ENCODE measurements at regions of chr17 and their contacts with region 1.

Region 1: GRCh38 chr17:17919169-17920107 is 52.8 kb downstream of the TOM1L2 start:
- DNase-seq: peak; percentile 81
- ATAC-seq: peak; percentile 95
- H3K4me3 Mint-ChIP-seq: no peak overlapping the region
- H3K27ac Mint-ChIP-seq: no peak overlapping the region
- H3K4me1 Mint-ChIP-seq: peaks cover 11% of the 10 kb centered on the region
- H3K27me3 Mint-ChIP-seq: no peaks in the 10 kb centered on the region

Region 2: DNA sequence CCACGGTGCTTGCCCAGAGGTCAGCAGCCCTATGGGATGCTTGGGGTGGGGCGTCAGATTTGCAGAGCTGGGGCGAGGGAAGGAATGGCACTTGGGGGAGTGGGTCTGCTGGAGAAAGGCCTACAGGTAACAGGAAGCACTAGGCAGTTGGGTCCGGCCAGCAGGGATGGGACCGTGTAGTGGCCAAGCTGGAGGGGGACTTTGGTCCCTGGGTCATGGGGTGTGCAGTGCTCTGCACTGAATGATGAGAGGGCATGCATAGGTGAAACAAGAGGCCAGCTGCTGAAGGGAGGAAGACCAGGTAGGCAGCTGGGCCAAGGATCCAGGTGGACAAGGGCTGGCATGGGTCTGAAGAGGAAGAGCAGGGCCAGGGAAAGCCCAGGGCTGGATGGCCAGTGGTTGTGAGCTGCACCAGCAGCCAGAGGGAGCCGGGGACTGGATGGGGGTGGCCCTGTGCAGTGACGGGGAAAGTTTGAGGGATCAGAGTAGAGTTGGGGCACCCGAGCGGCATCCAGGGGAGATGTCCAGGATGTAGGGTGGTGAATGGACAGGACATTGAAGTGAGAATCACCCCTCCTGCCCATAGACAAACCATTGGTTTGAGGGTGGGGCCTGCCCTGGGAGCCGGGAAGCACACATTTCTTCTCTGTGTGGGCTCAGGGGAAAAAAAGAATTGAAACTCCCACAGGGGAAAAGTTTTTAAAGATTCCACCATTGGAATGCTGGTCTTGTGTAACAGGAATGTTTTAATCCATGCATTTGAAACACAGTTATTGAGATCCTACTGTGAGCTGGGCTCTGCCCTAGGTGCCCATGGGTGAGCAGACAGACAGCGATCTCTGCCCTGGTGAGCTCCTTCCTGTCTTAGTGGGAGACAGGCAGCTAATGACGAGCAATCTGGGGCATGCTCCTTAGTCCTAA is 213.0 kb before region 1 on chr17:
- CTCF ChIA-PET with region 1: no interaction called
- POLR2A ChIA-PET with region 1: no interaction called
- intact Hi-C with region 1: no loop called
- DNase-seq: no peak
- ATAC-seq: no peak
- H3K4me3 Mint-ChIP-seq: no peak overlapping the region
- H3K27ac Mint-ChIP-seq: no peak overlapping the region
- H3K4me1 Mint-ChIP-seq: peaks cover 4% of the 10 kb centered on the region
- H3K27me3 Mint-ChIP-seq: no peaks in the 10 kb centered on the region

Region 3: GRCh38 chr17:17812211-17813057 is 107.0 kb before region 1 on chr17:
- CTCF ChIA-PET with region 1: interaction called, 13 read pairs
- POLR2A ChIA-PET with region 1: no interaction called
- intact Hi-C with region 1: loop called in 1 of 2 experiments (anchors 1 kb)
- DNase-seq: peak; percentile 78
- ATAC-seq: peak; percentile 37
- H3K4me3 Mint-ChIP-seq: no peak overlapping the region
- H3K27ac Mint-ChIP-seq: no peak overlapping the region
- H3K4me1 Mint-ChIP-seq: peaks cover 11% of the 10 kb centered on the region
- H3K27me3 Mint-ChIP-seq: no peaks in the 10 kb centered on the region

Region 4: GRCh38 chr17:17890773-17891759 is 28.4 kb before region 1 on chr17:
- CTCF ChIA-PET with region 1: interaction called, 6 read pairs
- POLR2A ChIA-PET with region 1: no interaction called
- intact Hi-C with region 1: loop called in 1 of 2 experiments (anchors 1 kb)
- DNase-seq: peak; percentile 73
- ATAC-seq: peak; percentile 88
- H3K4me3 Mint-ChIP-seq: no peak overlapping the region
- H3K27ac Mint-ChIP-seq: no peak overlapping the region
- H3K4me1 Mint-ChIP-seq: peaks cover 6% of the 10 kb centered on the region
- H3K27me3 Mint-ChIP-seq: no peaks in the 10 kb centered on the region

Region 5: DNA sequence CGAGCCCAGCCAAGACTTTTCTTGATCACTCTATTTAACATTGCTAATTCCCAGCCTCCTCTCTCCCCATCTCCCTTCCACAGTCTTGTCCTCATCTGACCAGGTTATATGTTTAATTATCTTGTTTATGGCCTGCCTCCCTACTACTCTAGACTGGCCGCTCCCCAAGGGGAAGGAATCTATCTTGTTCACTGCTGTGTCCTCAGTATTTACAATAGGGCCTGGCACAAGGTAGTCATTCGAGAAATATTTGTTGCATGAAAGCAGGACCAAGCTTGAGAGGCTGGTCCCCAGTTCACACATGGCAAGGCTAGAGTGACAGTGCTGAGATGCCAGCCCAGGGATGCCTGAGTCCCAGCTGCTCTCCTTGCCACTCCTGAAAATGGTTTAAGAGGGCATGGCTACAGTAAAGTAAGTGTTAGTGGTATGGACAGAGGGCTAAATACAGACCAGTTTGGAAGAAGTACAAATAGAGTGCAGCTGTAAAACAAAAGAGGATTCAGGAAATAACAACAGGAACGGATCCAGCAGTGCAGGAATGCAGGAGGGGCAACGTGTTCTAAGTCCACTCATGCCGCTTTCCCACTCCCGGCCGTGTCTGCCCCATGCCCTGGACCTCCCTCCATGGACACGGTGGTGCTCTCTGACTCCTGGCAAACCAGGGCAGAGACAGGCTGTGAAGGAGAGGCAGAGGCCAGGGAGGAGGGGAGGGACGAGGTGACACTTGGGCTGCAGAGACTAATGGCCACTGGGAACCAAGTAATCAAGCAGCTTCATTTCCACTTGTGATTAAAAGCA is 12.8 kb before region 1 on chr17:
- CTCF ChIA-PET with region 1: interaction called, 15 read pairs
- POLR2A ChIA-PET with region 1: no interaction called
- intact Hi-C with region 1: no loop called
- DNase-seq: no peak
- ATAC-seq: no peak
- H3K4me3 Mint-ChIP-seq: no peak overlapping the region
- H3K27ac Mint-ChIP-seq: no peak overlapping the region
- H3K4me1 Mint-ChIP-seq: no peaks in the 10 kb centered on the region
- H3K27me3 Mint-ChIP-seq: no peaks in the 10 kb centered on the region

Region 6: GRCh38 chr17:17933775-17934174 is 14.3 kb after region 1 on chr17:
- CTCF ChIA-PET with region 1: interaction called, 17 read pairs
- POLR2A ChIA-PET with region 1: no interaction called
- intact Hi-C with region 1: no loop called
- DNase-seq: no peak
- ATAC-seq: peak; percentile 68
- H3K4me3 Mint-ChIP-seq: no peak overlapping the region
- H3K27ac Mint-ChIP-seq: no peak overlapping the region
- H3K4me1 Mint-ChIP-seq: peaks cover 33% of the 10 kb centered on the region
- H3K27me3 Mint-ChIP-seq: no peaks in the 10 kb centered on the region

Region 7: DNA sequence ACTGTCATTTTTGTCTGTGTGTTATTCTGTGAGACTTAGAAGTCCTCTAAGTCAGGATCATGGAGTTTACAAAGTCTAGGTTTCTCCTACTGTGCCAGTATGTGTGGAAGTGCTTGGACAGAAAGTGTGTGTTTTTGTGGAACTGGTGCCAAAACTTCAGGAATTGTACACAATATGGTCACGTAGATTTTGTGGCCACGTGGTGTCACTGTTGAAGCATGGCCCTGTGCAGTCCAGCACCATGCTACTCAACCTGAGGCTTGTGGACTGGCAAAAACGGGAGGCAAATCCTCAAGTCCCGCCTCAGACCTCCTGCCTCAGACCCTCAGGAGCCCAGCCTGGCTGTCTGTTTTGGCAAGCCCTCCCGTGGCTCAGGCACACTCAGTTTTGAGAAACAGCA is 247.5 kb after region 1 on chr17:
- CTCF ChIA-PET with region 1: no interaction called
- POLR2A ChIA-PET with region 1: no interaction called
- intact Hi-C with region 1: no loop called
- DNase-seq: no peak
- ATAC-seq: no peak
- H3K4me3 Mint-ChIP-seq: no peak overlapping the region
- H3K27ac Mint-ChIP-seq: no peak overlapping the region
- H3K4me1 Mint-ChIP-seq: no peaks in the 10 kb centered on the region
- H3K27me3 Mint-ChIP-seq: no peaks in the 10 kb centered on the region